GM18951 (cell line): ENCODE measurements at regions of chr5 and their contacts with region 1.

Region 1: DNA sequence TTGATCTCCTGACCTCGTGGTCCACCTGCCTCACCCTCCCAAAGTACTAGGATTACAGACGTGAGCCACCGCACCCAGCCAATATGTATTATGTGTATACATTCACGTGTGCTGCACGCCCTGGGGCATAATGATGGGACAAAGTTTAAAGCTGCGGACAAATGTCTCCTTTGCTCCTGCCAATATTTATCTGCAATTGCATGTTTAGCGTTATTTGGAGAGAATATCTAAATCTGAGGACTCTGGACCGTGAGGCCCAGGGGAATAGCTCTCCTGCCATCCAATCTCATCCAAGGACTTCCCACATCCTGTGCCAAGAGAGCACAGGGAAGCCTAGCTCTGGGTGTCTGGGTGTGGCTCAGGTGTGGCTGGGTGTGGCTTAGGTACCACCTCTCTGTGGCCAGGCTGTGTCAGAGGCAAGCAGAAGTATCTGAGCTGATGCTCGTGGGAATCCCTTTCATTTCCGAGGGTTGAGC is 6.9 kb upstream of the BOD1 start:
- POLR2A ChIP-seq: no peak

Region 2: DNA sequence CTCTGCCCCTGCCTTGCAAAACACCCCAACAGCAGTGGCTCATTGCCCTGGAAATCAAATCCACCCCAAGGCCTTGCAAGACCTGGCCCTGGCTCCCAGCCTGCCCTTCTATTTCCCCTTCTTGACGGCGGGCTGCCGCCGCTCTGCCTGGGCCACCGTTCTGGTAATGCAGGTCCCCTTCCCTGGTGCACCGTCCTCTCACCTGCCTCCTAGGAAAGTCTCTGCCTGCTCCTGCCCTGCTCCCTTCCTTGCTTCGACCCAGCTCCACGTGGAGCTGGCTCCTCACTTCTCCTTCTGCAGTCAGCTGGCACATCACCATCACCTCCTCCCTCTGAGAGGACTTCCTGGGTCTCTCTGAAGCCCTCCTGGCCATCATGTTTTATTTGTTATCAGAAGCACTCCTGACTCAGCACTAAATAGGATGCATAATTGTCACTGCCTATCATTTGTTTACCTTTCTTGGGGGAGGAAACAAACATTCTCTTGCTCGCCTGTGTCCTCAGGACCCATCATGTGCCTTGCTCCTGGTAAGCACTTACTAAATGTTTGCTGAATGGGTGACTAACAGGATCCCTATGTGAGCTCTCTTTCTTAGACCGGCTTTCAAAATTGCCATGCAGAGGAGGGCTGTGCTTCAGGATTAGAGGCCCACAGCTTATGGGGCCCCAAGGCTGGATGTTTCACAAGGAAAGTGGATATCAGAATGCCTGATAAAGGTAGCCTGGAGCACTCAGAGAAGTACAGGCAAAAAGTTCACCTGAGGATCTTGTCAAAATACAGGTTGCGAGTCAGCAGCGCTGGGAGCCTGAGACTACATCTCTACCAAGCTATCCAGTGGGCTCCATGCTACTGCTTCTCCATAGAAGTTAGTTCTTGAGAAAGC is 346.1 kb after region 1 on chr5:
- in situ Hi-C with region 1: loop called (anchors 5 kb)
- POLR2A ChIP-seq: no peak